ENCODE measurements at regions of chr1 and their contacts with region 1.

Region 1: GRCh38 chr1:79197421-79197820 is 190.9 kb upstream of the ADGRL4 start:
- DNase-seq: no peak
- ATAC-seq: no peak

Region 2: DNA sequence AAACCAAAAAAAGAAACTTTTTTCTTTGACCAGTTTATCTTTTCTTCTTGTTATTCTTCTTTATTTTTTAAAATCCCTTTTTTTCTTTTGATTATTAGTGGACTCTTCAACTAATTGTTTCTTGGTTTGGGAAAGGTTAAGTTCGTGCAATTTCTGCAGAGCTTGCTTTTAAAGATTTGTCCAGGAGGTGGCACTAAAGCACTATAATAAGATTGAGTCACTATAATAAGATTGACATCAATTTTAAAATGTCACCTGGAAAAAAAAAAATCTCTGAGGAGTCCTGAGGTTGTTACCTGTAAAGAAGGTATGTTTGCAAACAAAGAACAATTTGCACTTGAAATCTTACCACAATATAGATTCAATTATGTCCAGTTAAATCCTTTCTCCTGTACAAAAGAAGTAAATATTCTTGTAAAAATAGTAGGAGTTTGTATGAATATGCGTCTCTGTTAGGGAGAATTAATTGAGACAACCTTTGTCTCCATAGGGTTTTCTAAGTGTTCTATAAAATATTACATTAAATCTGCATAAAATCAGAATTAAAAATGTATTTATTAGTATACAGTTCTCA is 357.6 kb before region 1 on chr1:
- intact Hi-C with region 1: loop called (anchors 5 kb)
- DNase-seq: no peak
- ATAC-seq: no peak

Region 3: DNA sequence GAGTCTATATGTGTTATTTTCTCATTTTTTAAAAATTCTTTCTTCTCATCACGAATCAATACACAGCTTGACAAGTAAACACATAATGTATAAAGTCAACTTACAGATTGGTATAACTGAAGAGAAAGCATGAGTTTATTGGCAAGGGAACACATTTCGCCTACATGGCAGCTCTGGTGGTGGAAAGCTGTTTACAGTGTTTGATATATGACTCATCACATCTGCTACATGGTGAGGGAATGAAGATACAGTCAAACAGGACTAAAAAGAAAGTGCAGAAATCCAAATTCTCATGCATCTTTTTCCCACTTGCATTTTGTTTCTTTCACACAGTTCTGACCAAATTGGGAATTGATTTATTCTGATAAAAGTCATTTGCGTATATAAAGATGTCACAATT is 68.7 kb before region 1 on chr1:
- intact Hi-C with region 1: no loop called
- DNase-seq: no peak
- ATAC-seq: no peak